ENCODE measurements at regions of chr19 and their contacts with region 1.

Region 1: GRCh38 chr19:13262450-13262849 is 112.2 kb downstream of the IER2 start:
- DNase-seq: no peak
- H3K4me3 ChIP-seq: no peak overlapping the region
- H3K27ac ChIP-seq: no peak overlapping the region
- H3K4me1 ChIP-seq: peaks cover 0 to 9% (median 0%) of the 10 kb centered on the region in 4 donors
- H3K27me3 ChIP-seq: no peaks in the 10 kb centered on the region
- CTCF ChIP-seq: peak; percentile 48 to 63 (median 57)
- EP300 ChIP-seq: no peak
- POLR2A ChIP-seq: no peak

Region 2: GRCh38 chr19:12933287-12934072 is 329.0 kb before region 1 on chr19 and contains the start of gene FARSA:
- intact Hi-C with region 1: no loop called
- DNase-seq: peak; percentile 97
- H3K4me3 ChIP-seq: peak within 1 kb of the TSS; percentile 74 to 97 (median 90)
- H3K27ac ChIP-seq: peak within 1 kb of the TSS; percentile 76 to 89 (median 85)
- H3K4me1 ChIP-seq: peaks cover 25 to 37% (median 33%) of the 10 kb centered on the region in 4 donors
- H3K27me3 ChIP-seq: no peaks in the 10 kb centered on the region
- CTCF ChIP-seq: no peak
- EP300 ChIP-seq: no peak
- POLR2A ChIP-seq: peak; percentile 21
- total RNA-seq, gene FARSA: 21.6 to 49.2 (median 35.8) TPM

Region 3: GRCh38 chr19:12974301-12975220 is 287.9 kb before region 1 on chr19:
- intact Hi-C with region 1: loop called (anchors 5 kb)
- DNase-seq: no peak
- H3K4me3 ChIP-seq: no peak overlapping the region
- H3K27ac ChIP-seq: no peak overlapping the region
- H3K4me1 ChIP-seq: peaks cover 0 to 9% (median 5%) of the 10 kb centered on the region in 4 donors
- H3K27me3 ChIP-seq: no peaks in the 10 kb centered on the region
- CTCF ChIP-seq: no peak
- EP300 ChIP-seq: no peak
- POLR2A ChIP-seq: no peak

Region 4: DNA sequence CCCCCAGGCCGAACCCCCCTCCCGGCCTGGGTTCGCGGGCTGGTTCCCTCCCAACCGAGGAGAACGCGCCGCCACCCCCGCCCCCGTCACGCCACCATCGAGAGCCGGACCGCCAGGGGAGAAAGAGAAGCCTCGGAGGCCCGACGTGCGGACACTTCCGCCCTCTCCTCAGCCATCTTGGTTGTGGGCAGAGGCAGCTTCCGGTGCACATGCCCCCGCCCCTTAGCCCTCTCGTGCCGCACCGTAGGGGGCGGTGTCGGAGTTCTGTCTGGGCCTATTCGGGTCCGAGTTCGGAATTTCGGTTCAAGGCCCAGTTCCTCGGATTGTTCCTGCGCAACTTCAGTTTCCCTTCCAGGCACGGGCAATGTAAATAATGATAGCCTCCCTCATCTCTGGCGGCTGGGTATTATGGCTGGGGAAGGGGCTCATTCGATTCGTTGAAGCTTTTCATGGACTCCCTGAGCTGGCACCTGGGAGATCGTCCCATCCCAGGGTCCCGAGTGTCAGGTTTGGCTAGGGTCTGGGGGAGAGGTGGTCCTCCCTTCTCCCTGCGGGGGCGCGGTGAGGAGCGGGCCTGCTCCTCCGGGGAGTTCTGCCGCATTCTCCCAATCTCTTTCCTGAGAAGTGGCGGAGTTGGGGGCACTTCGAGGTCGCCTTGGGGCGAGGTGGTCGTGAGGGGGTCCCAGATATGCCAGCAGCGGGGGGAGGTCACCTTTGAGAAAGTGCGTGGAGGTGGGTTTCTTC is 112.1 kb before region 1 on chr19 and contains the starts of genes IER2 and STX10:
- intact Hi-C with region 1: loop called (anchors 10 kb)
- DNase-seq: peak; percentile 99
- H3K4me3 ChIP-seq: peak within 1 kb of the TSS; percentile 70 to 95 (median 94)
- H3K27ac ChIP-seq: peak within 1 kb of the TSS; percentile 95 to 100 (median 98)
- H3K4me1 ChIP-seq: peaks cover 10 to 57% (median 40%) of the 10 kb centered on the region in 4 donors
- H3K27me3 ChIP-seq: no peaks in the 10 kb centered on the region
- CTCF ChIP-seq: peak; percentile 58 to 75 (median 62)
- EP300 ChIP-seq: no peak
- POLR2A ChIP-seq: peak; percentile 66
- total RNA-seq, gene IER2: 29.1 to 144 (median 62.3) TPM
- total RNA-seq, gene STX10: 50.2 to 62.6 (median 56.6) TPM

Region 5: DNA sequence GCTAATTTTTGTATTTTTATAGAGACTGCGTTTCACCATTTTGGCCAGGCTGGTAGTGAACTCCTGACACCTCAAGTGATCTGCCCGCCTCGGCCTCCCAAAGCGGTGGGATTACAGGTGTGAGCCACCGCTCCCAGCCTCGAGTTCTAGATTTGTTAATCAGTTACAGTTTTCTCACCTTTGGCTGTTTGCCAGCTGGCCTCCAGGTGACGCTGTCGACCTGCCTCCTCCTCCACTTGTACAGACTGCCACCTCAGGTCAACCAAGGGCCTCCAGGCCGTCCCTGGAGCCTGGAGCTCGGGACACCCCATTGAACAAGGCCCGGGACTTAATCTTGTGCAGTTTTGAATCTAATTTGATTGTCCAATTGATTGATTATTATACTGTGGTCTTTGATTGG is 66.8 kb before region 1 on chr19:
- intact Hi-C with region 1: loop called (anchors 2 kb)
- DNase-seq: no peak
- H3K4me3 ChIP-seq: no peak overlapping the region
- H3K27ac ChIP-seq: no peak overlapping the region
- H3K4me1 ChIP-seq: peaks cover 0 to 3% (median 0%) of the 10 kb centered on the region in 4 donors
- H3K27me3 ChIP-seq: no peaks in the 10 kb centered on the region
- CTCF ChIP-seq: no peak
- EP300 ChIP-seq: no peak
- POLR2A ChIP-seq: no peak

Region 6: DNA sequence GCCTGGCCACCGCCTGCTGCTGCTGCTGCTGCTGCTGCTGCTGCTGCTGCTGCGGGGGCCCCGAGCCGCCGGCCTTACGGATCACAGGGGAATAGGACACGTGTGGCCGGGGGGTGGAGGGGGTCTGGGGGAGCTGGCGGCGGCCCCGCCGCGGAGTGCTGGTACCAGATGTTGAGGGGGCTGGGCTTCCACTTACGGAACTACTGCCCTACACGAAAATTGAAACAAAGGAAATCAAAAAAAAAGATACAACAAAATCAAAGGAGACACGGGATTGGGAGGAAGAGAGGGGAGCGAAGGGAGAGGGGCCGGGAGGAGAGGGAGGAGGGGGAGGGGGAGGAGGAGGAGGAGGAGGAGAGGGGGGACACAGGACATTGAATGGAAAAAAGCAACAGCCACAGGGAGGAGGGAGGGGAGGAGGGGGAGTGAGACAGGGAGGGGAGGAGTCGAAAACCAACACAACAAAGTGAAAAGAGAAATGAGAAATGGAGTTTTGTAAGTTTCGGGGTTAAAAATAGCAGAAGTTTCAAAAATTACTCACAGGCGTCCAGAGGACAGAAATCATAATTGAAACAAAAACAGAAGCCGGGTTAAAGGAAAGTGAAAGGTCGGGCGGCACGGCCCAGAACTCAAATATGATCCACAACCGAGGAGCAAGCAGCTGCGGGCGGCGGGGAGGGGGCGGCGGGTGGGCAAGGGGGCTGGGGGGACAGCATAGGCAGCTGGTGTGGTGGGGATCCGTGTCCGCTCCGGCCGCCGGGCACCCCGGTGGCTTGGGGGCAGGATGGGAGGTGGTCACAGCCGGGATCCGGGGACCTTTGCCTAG is 54.4 kb before region 1 on chr19:
- intact Hi-C with region 1: loop called (anchors 5 kb)
- DNase-seq: no peak
- H3K4me3 ChIP-seq: peak overlapping the region; percentile 49 to 64 (median 57)
- H3K27ac ChIP-seq: peak overlapping the region; percentile 53 to 70 (median 64)
- H3K4me1 ChIP-seq: peaks cover 0 to 21% (median 18%) of the 10 kb centered on the region in 4 donors
- H3K27me3 ChIP-seq: no peaks in the 10 kb centered on the region
- CTCF ChIP-seq: no peak
- EP300 ChIP-seq: no peak
- POLR2A ChIP-seq: no peak